ENCODE measurements at regions of chr2 and their contacts with region 1.

Region 1: GRCh38 chr2:237190966-237191713 is 105.5 kb downstream of the COPS8 start:
- DNase-seq: no peak
- H3K4me3 ChIP-seq: no peak overlapping the region
- H3K27ac ChIP-seq: peak overlapping the region; percentile 48 to 88
- H3K4me1 ChIP-seq: no peaks in the 10 kb centered on the region
- H3K27me3 ChIP-seq: no peaks in the 10 kb centered on the region
- CTCF ChIP-seq: no peak
- POLR2A ChIP-seq: no peak

Region 2: GRCh38 chr2:237134321-237135258 is 56.5 kb before region 1 on chr2:
- intact Hi-C with region 1: loop called (anchors 2 kb)
- DNase-seq: no peak
- H3K4me3 ChIP-seq: no peak overlapping the region
- H3K27ac ChIP-seq: peak overlapping the region in 1 of 2 donors; percentile 49
- H3K4me1 ChIP-seq: no peaks in the 10 kb centered on the region
- H3K27me3 ChIP-seq: no peaks in the 10 kb centered on the region
- CTCF ChIP-seq: no peak
- POLR2A ChIP-seq: no peak

Region 3: GRCh38 chr2:237178396-237178795 is 12.7 kb before region 1 on chr2:
- intact Hi-C with region 1: no loop called
- DNase-seq: no peak
- H3K4me3 ChIP-seq: no peak overlapping the region
- H3K27ac ChIP-seq: no peak overlapping the region
- H3K4me1 ChIP-seq: no peaks in the 10 kb centered on the region
- H3K27me3 ChIP-seq: no peaks in the 10 kb centered on the region
- CTCF ChIP-seq: no peak
- POLR2A ChIP-seq: no peak

Region 4: DNA sequence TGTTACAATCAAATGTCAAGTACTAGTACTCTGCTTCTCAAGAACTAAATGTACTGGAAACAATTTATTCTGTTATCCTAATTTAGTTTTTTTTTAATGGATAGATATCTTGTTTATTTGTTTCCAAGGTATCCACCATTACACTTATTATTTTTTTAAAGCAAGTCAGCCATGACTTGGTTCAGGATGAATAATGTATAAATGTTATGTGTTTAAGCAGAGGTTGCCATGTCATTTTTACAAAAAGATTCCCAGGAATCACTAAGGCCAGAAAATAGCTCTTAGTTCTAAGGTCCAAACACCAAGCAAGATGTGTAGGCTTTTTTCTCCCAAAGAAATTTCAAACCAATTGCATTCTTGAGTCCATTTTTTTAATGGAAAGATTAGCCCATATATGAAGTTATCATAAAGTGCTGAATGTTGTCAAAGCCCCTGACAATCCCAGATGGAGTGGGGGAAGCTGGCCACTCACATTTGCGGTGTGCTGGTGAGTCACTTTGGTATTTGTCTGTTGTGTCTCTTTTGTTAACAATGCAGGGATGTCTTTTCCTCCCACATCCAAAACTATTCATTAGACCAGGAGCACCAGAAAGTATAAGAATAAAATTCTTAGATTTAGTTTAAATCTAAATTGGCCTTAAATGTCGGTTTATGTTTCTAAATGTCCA is 63.9 kb after region 1 on chr2:
- intact Hi-C with region 1: loop called (anchors 2 kb)
- DNase-seq: no peak
- H3K4me3 ChIP-seq: no peak overlapping the region
- H3K27ac ChIP-seq: peak overlapping the region; percentile 65 to 94
- H3K4me1 ChIP-seq: peaks cover 0 to 3% of the 10 kb centered on the region in 2 donors
- H3K27me3 ChIP-seq: no peaks in the 10 kb centered on the region
- CTCF ChIP-seq: no peak
- POLR2A ChIP-seq: no peak

Measured in breast epithelium (tissue), 4 donors.